Prostate gland (tissue), 2 donors: ENCODE measurements at regions of chr10 and their contacts with region 1.

Region 1: GRCh38 chr10:114103284-114103683 is 59.6 kb downstream of the ADRB1 start:
- DNase-seq: peak; percentile 34
- H3K4me3 ChIP-seq: no peak overlapping the region
- H3K27ac ChIP-seq: no peak overlapping the region
- H3K4me1 ChIP-seq: no peaks in the 10 kb centered on the region
- H3K27me3 ChIP-seq: no peaks in the 10 kb centered on the region
- CTCF ChIP-seq: peak; percentile 29 to 81 (median 64)
- POLR2A ChIP-seq: no peak

Region 2: GRCh38 chr10:113802997-113803396 is 300.3 kb before region 1 on chr10:
- intact Hi-C with region 1: loop called (anchors 2 kb)
- DNase-seq: no peak
- H3K4me3 ChIP-seq: no peak overlapping the region
- H3K27ac ChIP-seq: peak overlapping the region; percentile 25 to 26
- H3K4me1 ChIP-seq: peaks cover 8% of the 10 kb centered on the region
- H3K27me3 ChIP-seq: no peaks in the 10 kb centered on the region
- CTCF ChIP-seq: no peak
- POLR2A ChIP-seq: no peak

Region 3: DNA sequence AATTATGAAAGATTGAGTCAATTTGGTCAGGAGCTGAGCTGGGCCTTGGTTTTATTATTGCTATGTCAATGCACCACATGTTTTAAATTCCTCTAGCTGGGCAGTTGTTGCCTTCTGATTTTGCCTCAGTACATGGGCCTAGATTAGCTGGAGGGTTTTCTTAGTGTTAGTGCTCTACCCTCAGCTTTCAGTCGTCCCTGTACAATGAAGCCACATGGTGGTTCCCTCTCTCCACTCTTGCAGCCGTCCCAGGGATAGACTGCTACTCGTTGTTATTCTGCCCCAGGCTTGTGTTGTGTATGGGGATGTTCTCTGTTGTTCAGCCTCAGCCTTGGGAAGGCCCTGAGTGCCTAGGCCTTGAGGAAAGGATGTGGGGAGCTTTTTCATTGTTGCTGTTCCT is 211.8 kb before region 1 on chr10:
- intact Hi-C with region 1: loop called (anchors 10 kb)
- DNase-seq: no peak
- H3K4me3 ChIP-seq: no peak overlapping the region
- H3K27ac ChIP-seq: no peak overlapping the region
- H3K4me1 ChIP-seq: no peaks in the 10 kb centered on the region
- H3K27me3 ChIP-seq: no peaks in the 10 kb centered on the region
- CTCF ChIP-seq: no peak
- POLR2A ChIP-seq: no peak

Region 4: GRCh38 chr10:113982769-113983168 is 120.5 kb before region 1 on chr10:
- intact Hi-C with region 1: no loop called
- DNase-seq: peak; percentile 73
- H3K4me3 ChIP-seq: no peak overlapping the region
- H3K27ac ChIP-seq: peak overlapping the region; percentile 41 to 43
- H3K4me1 ChIP-seq: peaks cover 4% of the 10 kb centered on the region
- H3K27me3 ChIP-seq: no peaks in the 10 kb centered on the region
- CTCF ChIP-seq: no peak
- POLR2A ChIP-seq: no peak

Region 5: GRCh38 chr10:114172776-114173602 is 69.7 kb after region 1 on chr10:
- intact Hi-C with region 1: no loop called
- DNase-seq: peak; percentile 21
- H3K4me3 ChIP-seq: peak overlapping the region; percentile 87 to 99
- H3K27ac ChIP-seq: peak overlapping the region; percentile 96 to 99
- H3K4me1 ChIP-seq: peaks cover 5% of the 10 kb centered on the region
- H3K27me3 ChIP-seq: no peaks in the 10 kb centered on the region
- CTCF ChIP-seq: no peak
- POLR2A ChIP-seq: no peak

Region 6: DNA sequence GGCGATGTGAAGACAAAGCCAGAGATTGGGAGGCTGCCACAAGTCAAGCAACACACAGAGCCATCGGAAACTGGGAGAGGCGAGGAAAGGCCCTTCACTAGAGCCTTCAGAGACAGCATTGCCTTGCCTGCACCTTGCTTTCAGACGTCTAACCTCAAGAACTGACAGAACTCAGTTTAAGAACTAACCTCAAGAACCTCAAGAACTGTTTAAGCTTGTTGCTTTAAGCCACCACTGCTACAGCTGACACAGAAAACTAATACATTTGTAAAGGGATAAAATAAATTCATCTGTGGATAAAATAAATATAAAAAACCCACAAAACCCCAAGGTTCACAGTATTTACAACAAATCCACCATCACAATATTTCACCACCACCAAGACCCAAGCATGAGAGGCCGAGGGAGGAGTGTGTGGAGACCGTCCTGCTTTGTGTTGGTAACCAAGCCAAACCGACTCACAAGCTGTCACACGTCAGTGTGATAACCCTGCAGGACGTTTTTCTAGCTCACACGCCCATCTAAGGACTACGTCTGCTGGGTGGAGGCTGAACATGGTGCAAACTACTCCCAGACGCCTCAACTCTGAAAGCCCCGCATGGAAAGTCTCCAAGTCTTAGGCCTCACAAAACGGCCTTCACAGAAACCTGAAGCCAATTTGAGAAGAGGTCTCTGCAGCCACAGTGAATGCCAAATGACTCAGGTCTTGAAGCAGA is 438.0 kb after region 1 on chr10:
- intact Hi-C with region 1: no loop called
- DNase-seq: no peak
- H3K4me3 ChIP-seq: no peak overlapping the region
- H3K27ac ChIP-seq: no peak overlapping the region
- H3K4me1 ChIP-seq: no peaks in the 10 kb centered on the region
- H3K27me3 ChIP-seq: no peaks in the 10 kb centered on the region
- CTCF ChIP-seq: no peak
- POLR2A ChIP-seq: no peak

Region 7: GRCh38 chr10:115402690-115403089 is 1299.4 kb after region 1 on chr10:
- intact Hi-C with region 1: no loop called
- DNase-seq: no peak
- H3K4me3 ChIP-seq: no peak overlapping the region
- H3K27ac ChIP-seq: no peak overlapping the region
- H3K4me1 ChIP-seq: no peaks in the 10 kb centered on the region
- H3K27me3 ChIP-seq: no peaks in the 10 kb centered on the region
- CTCF ChIP-seq: no peak
- POLR2A ChIP-seq: no peak